ENCODE measurements at regions of chr3 and their contacts with region 1.

Region 1: DNA sequence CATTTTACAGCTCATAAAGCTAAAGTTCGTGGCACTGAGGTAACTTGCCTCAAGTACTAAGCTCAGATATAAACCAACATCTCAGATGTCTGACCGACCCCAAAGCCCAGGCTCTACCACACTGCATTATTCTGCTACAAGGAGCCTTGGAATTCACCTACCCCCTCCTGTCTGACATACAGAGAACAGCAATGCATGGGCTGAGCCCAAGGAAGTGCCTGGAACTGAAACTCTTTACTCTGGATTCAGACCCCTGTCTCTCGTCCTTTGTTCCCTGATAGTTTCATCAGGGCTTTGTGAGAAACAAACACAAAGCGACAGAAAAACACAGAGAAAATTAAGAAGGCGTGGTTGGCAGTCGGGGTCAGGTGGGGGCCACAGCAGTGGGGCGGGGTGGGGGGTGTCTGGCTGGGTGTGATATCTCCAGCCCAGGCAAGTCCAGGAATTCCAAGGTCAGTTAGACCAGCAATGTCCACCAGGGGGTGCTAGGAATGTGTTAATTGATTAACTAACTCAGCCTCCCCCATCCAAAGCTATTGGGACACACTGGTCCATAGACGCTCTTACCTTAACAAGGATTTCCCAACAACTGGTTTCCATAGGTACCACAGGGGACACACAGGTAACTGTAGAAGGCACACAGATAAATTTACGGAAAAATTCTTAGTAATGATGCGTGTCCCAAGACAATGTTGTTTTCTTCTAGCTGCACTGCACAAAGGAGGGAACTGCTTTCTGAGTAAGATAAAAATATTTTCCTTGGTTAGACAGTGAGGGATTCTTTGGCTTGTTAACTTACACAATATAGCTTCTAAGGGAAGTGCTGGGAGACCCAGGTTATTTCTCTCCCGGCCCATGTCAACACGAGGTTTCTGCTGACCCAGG is 18.8 kb upstream of the SSUH2 start:
- DNase-seq: peak; percentile 71
- ATAC-seq: peak; percentile 89
- H3K4me3 ChIP-seq: no peak overlapping the region
- H3K27ac ChIP-seq: no peak overlapping the region
- H3K4me1 ChIP-seq: peaks cover 8 to 33% of the 10 kb centered on the region in 2 experiments
- H3K27me3 ChIP-seq: no peaks in the 10 kb centered on the region
- CTCF ChIP-seq: peak; percentile 65 to 76 (median 66); a peak in 5 of 6 replicates
- POLR2A ChIP-seq: no peak
- RAD21 ChIP-seq: peak; percentile 74

Region 2: DNA sequence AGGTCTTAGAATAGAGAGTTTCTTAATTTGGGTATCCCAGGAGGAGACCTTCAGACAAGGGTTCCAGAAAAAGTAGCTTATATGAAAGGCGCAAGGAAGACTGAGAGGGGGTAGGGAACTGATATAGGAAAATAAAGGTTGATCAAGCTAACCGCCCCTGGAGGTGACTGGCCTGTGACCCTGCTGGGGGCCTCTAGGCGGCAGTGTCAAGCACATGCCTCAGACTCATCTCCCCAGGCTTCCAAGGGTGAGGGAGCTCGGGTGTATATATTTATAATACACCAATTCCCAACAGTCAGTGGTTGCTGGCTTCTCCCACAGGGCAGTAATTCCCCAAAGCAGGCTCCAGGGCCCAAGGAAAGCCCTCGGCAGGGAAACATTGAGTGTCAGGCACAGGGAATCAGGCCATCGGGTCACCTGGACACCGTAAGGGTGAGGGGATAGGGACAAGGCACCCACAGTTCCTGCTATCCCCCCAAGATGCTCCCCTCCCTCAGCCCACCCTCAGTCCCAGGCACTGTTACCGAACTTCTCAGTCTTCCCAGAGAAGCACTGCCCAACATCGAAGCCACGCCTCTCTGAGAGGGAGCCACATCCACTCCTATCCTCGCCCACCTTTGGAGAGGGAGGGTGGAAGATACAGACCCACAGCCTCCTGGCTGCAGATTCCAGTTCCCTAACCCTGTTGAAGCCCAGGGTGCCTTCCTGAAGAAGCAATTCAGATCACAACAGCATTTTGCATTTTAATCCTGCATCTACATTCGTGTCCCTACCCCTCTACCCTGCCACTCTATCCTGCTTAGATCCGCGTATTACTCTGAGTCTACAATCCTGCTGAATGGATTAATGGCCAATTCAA is 50.7 kb after region 1 on chr3:
- CTCF ChIA-PET with region 1: interaction called, 12 read pairs
- POLR2A ChIA-PET with region 1: no interaction called
- RAD21 ChIA-PET with region 1: no interaction called
- intact Hi-C with region 1: no loop called
- DNase-seq: peak; percentile 24
- ATAC-seq: peak; percentile 98
- H3K4me3 ChIP-seq: no peak overlapping the region
- H3K27ac ChIP-seq: no peak overlapping the region
- H3K4me1 ChIP-seq: peaks cover 0 to 10% of the 10 kb centered on the region in 2 experiments; a peak in 2 of 4 replicates
- H3K27me3 ChIP-seq: no peaks in the 10 kb centered on the region
- CTCF ChIP-seq: peak; percentile 54 to 97 (median 81)
- POLR2A ChIP-seq: no peak
- RAD21 ChIP-seq: peak; percentile 57

Region 3: DNA sequence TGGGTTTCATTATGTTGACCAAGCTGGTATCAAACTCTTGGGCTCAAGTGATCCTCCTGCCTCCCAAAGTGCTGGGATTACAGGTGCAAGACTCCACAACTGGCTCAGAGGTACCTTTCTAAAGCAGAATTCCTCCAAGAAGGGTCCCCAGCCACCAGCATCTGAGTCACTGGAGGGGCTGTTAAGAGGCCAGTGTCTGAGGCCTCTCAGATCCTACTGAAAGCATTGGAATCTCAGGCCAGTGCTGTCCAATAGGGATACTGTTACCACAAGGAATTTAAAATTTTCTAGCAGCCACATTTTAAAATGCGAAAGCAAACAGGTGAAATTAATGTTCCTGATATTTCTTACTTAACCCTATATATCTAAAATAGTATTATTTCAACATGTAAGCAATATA is 71.5 kb after region 1 on chr3:
- CTCF ChIA-PET with region 1: no interaction called
- POLR2A ChIA-PET with region 1: no interaction called
- RAD21 ChIA-PET with region 1: no interaction called
- intact Hi-C with region 1: no loop called
- DNase-seq: no peak
- ATAC-seq: no peak
- H3K4me3 ChIP-seq: no peak overlapping the region
- H3K27ac ChIP-seq: no peak overlapping the region
- H3K4me1 ChIP-seq: peaks cover 16 to 59% of the 10 kb centered on the region in 2 experiments
- H3K27me3 ChIP-seq: no peaks in the 10 kb centered on the region
- CTCF ChIP-seq: no peak
- POLR2A ChIP-seq: no peak
- RAD21 ChIP-seq: no peak

Region 4: DNA sequence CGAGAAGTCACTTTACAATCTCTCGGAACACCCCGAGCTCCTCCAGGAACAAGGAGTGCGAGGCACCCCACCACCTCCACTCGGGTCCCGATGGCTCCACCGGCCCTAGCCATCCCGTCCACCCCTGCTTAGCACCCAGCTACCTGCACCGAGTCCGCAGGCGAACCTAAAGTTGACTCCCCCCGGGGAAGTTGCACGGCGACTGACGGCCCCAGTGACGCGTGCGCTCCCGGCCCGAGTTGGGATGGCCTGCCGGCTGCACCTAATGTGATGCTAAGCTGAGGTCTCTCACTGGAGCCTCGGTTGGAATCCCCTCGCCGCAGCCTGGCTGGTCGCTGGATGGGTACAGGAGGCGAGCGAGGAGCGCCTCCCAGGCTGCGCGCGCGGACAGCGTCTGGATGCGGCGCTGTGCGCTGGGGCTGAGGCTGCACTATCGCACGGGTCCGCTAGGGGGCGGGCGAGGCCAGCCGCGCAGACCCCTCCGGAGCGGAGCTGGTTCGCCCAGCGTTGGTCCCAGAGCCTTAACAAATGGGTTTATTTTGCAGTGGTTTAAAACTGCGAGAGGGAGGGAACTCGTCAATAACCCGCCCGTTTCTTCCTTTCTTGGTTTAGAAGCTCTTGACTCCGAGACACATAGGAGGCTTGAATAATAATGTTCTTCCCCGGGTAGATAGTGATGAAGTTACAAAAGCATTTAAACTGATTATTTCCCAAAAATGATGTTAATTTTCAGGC is 105.8 kb after region 1 on chr3 and contains the start of gene OXTR:
- CTCF ChIA-PET with region 1: interaction called, 4 read pairs
- POLR2A ChIA-PET with region 1: no interaction called
- RAD21 ChIA-PET with region 1: no interaction called
- intact Hi-C with region 1: loop called (anchors 10 kb)
- DNase-seq: no peak
- ATAC-seq: peak; percentile 100
- H3K4me3 ChIP-seq: peak within 1 kb of the TSS in 1 of 2 experiments; percentile 33; a peak in 1 of 4 replicates
- H3K27ac ChIP-seq: no peak within 1 kb of the TSS
- H3K4me1 ChIP-seq: peaks cover 0 to 10% of the 10 kb centered on the region in 2 experiments; a peak in 1 of 4 replicates
- H3K27me3 ChIP-seq: no peaks in the 10 kb centered on the region
- CTCF ChIP-seq: peak; percentile 97 to 98 (median 97)
- POLR2A ChIP-seq: no peak
- RAD21 ChIP-seq: peak; percentile 90
- total RNA-seq, gene OXTR: 1.3 TPM

Region 5: GRCh38 chr3:8938021-8938420 is 274.6 kb after region 1 on chr3:
- CTCF ChIA-PET with region 1: no interaction called
- POLR2A ChIA-PET with region 1: no interaction called
- RAD21 ChIA-PET with region 1: no interaction called
- intact Hi-C with region 1: loop called (anchors 10 kb)
- DNase-seq: peak; percentile 23
- ATAC-seq: peak; percentile 83
- H3K4me3 ChIP-seq: no peak overlapping the region
- H3K27ac ChIP-seq: no peak overlapping the region
- H3K4me1 ChIP-seq: peaks cover 12 to 24% of the 10 kb centered on the region in 2 experiments
- H3K27me3 ChIP-seq: no peaks in the 10 kb centered on the region
- CTCF ChIP-seq: peak in 2 of 3 experiments; percentile 52 to 55; a peak in 4 of 6 replicates
- POLR2A ChIP-seq: no peak
- RAD21 ChIP-seq: peak; percentile 44; the same call in 1 of the 2 replicates

Region 6: DNA sequence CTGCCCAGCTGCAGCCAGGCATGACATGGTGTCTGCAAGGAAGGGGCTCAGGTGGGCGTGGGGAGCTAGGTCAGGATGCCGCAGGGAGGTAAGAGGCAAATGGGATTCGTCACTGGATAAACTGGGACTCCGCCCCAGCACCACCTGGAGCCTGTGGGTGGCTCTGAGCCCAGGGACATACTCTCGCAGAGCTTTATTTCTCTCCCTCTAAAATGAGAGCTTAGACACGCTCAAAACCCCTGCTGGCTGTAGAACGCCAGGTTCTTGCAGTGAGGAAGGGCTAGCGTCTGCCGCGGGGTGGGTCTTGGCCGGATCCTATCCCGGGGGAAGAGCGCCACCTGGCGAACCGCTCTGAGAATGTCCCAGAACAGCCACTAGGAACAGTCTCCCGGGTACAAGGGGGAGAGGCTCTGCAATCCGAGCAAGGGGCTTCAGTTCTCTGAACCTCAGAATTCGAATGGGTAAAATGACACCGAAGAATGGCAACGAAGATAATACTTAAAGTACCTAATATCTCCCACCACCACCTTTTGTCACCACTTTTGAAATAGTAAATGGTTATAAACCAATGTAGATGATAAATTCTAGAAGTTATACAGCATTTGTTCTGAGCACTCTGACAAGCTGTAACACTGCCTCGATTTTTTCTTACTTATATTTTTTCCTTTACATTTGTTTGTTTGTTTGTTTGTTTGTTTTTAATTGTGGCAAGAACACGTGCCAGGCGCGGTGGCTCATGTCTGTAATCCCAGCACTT is 639.2 kb after region 1 on chr3:
- CTCF ChIA-PET with region 1: interaction called, 4 read pairs
- POLR2A ChIA-PET with region 1: no interaction called
- RAD21 ChIA-PET with region 1: no interaction called
- intact Hi-C with region 1: loop called (anchors 5 kb)
- DNase-seq: peak; percentile 56
- ATAC-seq: peak; percentile 98
- H3K4me3 ChIP-seq: peak overlapping the region in 1 of 2 experiments; percentile 37; a peak in 3 of 4 replicates
- H3K27ac ChIP-seq: no peak overlapping the region
- H3K4me1 ChIP-seq: peaks cover 0 to 12% of the 10 kb centered on the region in 2 experiments; a peak in 2 of 4 replicates
- H3K27me3 ChIP-seq: no peaks in the 10 kb centered on the region
- CTCF ChIP-seq: peak; percentile 81 to 97 (median 94)
- POLR2A ChIP-seq: no peak
- RAD21 ChIP-seq: peak; percentile 96